Heart right ventricle (tissue), 16 donors: ENCODE measurements at regions of chr4 and their contacts with region 1.

Region 1: DNA sequence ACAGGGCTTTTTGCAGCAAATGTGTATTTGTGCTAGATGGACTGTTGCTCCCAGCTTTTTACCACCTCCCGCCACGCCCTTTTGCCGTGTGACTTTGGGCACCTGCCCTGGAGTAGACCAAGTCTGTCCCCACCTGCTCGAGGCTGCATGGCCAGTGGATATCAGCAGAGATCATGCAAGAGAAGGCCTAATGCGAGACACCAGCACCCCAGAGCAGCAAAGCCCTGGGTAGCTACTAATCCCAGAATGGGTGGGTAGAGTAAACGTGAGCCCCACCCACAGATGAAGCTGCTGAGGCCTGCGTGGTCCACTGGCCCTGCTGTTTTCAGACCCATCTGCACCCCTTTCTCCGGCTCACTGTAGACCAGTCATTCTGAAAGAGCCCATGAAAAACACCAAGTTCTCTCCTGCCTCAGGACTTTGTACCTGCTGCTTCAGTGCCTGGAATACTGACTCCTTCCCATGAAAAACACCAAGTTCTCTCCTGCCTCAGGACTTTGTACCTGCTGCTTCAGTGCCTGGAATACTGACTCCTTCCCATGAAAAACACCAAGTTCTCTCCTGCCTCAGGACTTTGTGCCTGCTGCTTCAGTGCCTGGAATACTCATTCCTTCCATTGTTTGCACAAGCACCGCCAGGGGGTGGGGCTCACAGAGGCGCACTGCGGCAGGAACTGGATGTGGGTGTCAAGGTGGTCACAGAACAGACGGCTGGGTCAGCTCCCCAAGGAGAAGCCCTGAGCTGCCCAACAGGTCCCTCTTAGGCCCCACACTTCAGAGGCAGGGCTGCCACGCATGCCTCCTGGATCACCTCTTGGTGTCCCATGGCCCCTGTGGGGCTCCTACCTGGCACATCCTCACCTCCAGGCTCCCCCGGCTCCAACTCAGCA is 5.1 kb upstream of the TNIP2 start:
- DNase-seq: no peak
- ATAC-seq: peak in 1 of 8 donors; percentile 18
- H3K4me3 ChIP-seq: no peak overlapping the region
- H3K27ac ChIP-seq: no peak overlapping the region
- H3K4me1 ChIP-seq: peaks cover 0 to 21% (median 12%) of the 10 kb centered on the region in 9 donors
- H3K27me3 ChIP-seq: no peaks in the 10 kb centered on the region
- CTCF ChIP-seq: peak in 4 of 9 donors; percentile 11 to 18 (median 16)

Region 2: GRCh38 chr4:2811830-2812611 is 50.7 kb after region 1 on chr4:
- intact Hi-C with region 1: loop called in 3 of 10 experiments (anchors 2 to 10 kb)
- DNase-seq: peak; percentile 70 to 78
- ATAC-seq: peak; percentile 57 to 86 (median 75)
- H3K4me3 ChIP-seq: peak overlapping the region; percentile 12 to 71 (median 48)
- H3K27ac ChIP-seq: peak overlapping the region; percentile 55 to 95 (median 84)
- H3K4me1 ChIP-seq: peaks cover 34 to 93% (median 56%) of the 10 kb centered on the region in 9 donors
- H3K27me3 ChIP-seq: no peaks in the 10 kb centered on the region
- CTCF ChIP-seq: no peak

Region 3: GRCh38 chr4:2843263-2843940 is 82.1 kb after region 1 on chr4 and contains the start of gene ADD1:
- intact Hi-C with region 1: loop called in 5 of 10 experiments (anchors 5 to 10 kb)
- DNase-seq: peak; percentile 89 to 94
- ATAC-seq: peak; percentile 98 to 99 (median 99)
- H3K4me3 ChIP-seq: peak within 1 kb of the TSS; percentile 67 to 94 (median 86)
- H3K27ac ChIP-seq: peak within 1 kb of the TSS; percentile 91 to 100 (median 96)
- H3K4me1 ChIP-seq: peaks cover 2 to 64% (median 49%) of the 10 kb centered on the region in 9 donors
- H3K27me3 ChIP-seq: no peaks in the 10 kb centered on the region
- CTCF ChIP-seq: no peak
- total RNA-seq, gene ADD1: 188 to 289 (median 214) TPM

Region 4: GRCh38 chr4:2891294-2891693 is 130.0 kb after region 1 on chr4:
- intact Hi-C with region 1: loop called in 3 of 10 experiments (anchors 10 kb)
- DNase-seq: no peak
- ATAC-seq: peak in 1 of 8 donors; percentile 4
- H3K4me3 ChIP-seq: no peak overlapping the region
- H3K27ac ChIP-seq: peak overlapping the region in 2 of 10 donors; percentile 11 to 44
- H3K4me1 ChIP-seq: peaks cover 4 to 50% (median 38%) of the 10 kb centered on the region in 9 donors
- H3K27me3 ChIP-seq: no peaks in the 10 kb centered on the region
- CTCF ChIP-seq: no peak

Region 5: GRCh38 chr4:2934813-2935761 is 173.8 kb after region 1 on chr4:
- intact Hi-C with region 1: loop called in 8 of 10 experiments (anchors 5 to 10 kb)
- DNase-seq: peak; percentile 95 to 98
- ATAC-seq: peak; percentile 80 to 90 (median 84)
- H3K4me3 ChIP-seq: peak overlapping the region; percentile 54 to 100 (median 94)
- H3K27ac ChIP-seq: peak overlapping the region; percentile 74 to 95 (median 90)
- H3K4me1 ChIP-seq: peaks cover 7 to 61% (median 57%) of the 10 kb centered on the region in 9 donors
- H3K27me3 ChIP-seq: no peaks in the 10 kb centered on the region
- CTCF ChIP-seq: peak in 2 of 9 donors; percentile 6 to 13